ENCODE measurements at regions of chrX and their contacts with region 1.

Region 1: GRCh38 chrX:152821145-152821765 is 9.3 kb downstream of the CETN2 start:
- DNase-seq: no peak
- ATAC-seq: peak; percentile 67
- H3K4me3 ChIP-seq: no peak overlapping the region
- H3K27ac ChIP-seq: no peak overlapping the region
- H3K4me1 ChIP-seq: no peaks in the 10 kb centered on the region
- H3K27me3 ChIP-seq: no peaks in the 10 kb centered on the region
- CTCF ChIP-seq: peak; percentile 60 to 69 (median 66)
- EP300 ChIP-seq: no peak
- POLR2A ChIP-seq: no peak
- RAD21 ChIP-seq: peak; percentile 50

Region 2: GRCh38 chrX:152632445-152633097 is 188.7 kb before region 1 on chrX:
- CTCF ChIA-PET with region 1: interaction called, 4 read pairs
- POLR2A ChIA-PET with region 1: no interaction called
- RAD21 ChIA-PET with region 1: no interaction called
- SMC1A ChIA-PET with region 1: no interaction called
- in situ Hi-C with region 1: loop called (anchors 25 kb)
- intact Hi-C with region 1: no loop called
- DNase-seq: no peak
- ATAC-seq: peak; percentile 60
- H3K4me3 ChIP-seq: no peak overlapping the region
- H3K27ac ChIP-seq: no peak overlapping the region
- H3K4me1 ChIP-seq: no peaks in the 10 kb centered on the region
- H3K27me3 ChIP-seq: no peaks in the 10 kb centered on the region; a peak in 2 of 4 replicates
- CTCF ChIP-seq: peak; percentile 70 to 92 (median 80)
- EP300 ChIP-seq: no peak
- POLR2A ChIP-seq: no peak
- RAD21 ChIP-seq: peak; percentile 66

Region 3: GRCh38 chrX:152958524-152959465 is 137.5 kb after region 1 on chrX:
- CTCF ChIA-PET with region 1: no interaction called
- POLR2A ChIA-PET with region 1: no interaction called
- RAD21 ChIA-PET with region 1: no interaction called
- SMC1A ChIA-PET with region 1: no interaction called
- in situ Hi-C with region 1: no loop called
- intact Hi-C with region 1: no loop called
- DNase-seq: peak; percentile 55
- ATAC-seq: peak; percentile 100
- H3K4me3 ChIP-seq: peak overlapping the region; percentile 53; the same call in 1 of the 2 replicates
- H3K27ac ChIP-seq: no peak overlapping the region
- H3K4me1 ChIP-seq: no peaks in the 10 kb centered on the region
- H3K27me3 ChIP-seq: no peaks in the 10 kb centered on the region
- CTCF ChIP-seq: peak; percentile 87 to 97 (median 89)
- EP300 ChIP-seq: no peak
- POLR2A ChIP-seq: 0 out of 2 replicates have a peak, but pooled peaks have one; percentile 38
- RAD21 ChIP-seq: peak; percentile 90

Region 4: DNA sequence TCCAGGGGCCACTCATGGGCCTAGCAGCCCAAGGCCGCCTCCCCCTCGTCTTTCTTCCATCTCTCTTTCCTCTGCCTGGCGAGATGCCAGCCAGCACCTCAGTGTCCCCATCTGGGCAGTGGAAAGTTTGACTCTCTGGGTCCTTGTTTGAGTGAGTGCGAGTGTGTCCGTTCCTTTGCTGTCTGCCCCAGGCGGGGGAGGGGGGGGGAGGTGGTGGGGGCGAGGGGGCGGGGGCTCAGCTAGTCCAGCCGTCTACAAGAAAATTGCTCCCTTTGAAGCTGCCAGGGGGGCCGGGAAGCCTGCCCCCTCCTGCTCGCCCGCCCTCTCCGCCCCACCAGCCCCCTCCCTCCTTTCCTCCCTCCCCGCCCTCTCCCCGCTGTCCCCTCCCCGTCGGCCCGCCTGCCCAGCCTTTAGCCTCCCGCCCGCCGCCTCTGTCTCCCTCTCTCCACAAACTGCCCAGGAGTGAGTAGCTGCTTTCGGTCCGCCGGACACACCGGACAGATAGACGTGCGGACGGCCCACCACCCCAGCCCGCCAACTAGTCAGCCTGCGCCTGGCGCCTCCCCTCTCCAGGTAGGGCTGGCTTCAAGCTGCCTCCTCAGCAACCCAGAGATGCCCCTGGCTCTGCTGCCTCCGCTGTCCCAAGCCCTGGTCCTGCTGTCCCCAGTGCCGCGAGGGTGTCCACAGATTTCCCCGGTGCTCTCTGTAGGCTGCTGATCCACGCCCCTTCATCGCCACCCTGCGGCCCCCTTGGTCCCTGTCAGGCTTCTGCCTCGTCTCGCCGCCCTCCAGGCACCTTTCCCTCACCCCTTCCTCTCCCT is 673.5 kb after region 1 on chrX and contains the start of gene BGN:
- CTCF ChIA-PET with region 1: no interaction called
- POLR2A ChIA-PET with region 1: no interaction called
- RAD21 ChIA-PET with region 1: no interaction called
- SMC1A ChIA-PET with region 1: no interaction called
- in situ Hi-C with region 1: no loop called
- intact Hi-C with region 1: no loop called
- DNase-seq: no peak
- ATAC-seq: peak; percentile 33; the same call in 2 of the 3 replicates
- H3K4me3 ChIP-seq: no peak within 1 kb of the TSS
- H3K27ac ChIP-seq: no peak within 1 kb of the TSS
- H3K4me1 ChIP-seq: no peaks in the 10 kb centered on the region
- H3K27me3 ChIP-seq: no peaks in the 10 kb centered on the region
- CTCF ChIP-seq: 0 out of 6 replicates have a peak, but pooled peaks of 1 of the 3 experiments have one; percentile 7
- EP300 ChIP-seq: no peak
- POLR2A ChIP-seq: no peak
- RAD21 ChIP-seq: no peak
- polyA plus RNA-seq, gene BGN: not detected